Kidney (tissue), 22 donors: ENCODE measurements at regions of chr9 and their contacts with region 1.

Region 1: DNA sequence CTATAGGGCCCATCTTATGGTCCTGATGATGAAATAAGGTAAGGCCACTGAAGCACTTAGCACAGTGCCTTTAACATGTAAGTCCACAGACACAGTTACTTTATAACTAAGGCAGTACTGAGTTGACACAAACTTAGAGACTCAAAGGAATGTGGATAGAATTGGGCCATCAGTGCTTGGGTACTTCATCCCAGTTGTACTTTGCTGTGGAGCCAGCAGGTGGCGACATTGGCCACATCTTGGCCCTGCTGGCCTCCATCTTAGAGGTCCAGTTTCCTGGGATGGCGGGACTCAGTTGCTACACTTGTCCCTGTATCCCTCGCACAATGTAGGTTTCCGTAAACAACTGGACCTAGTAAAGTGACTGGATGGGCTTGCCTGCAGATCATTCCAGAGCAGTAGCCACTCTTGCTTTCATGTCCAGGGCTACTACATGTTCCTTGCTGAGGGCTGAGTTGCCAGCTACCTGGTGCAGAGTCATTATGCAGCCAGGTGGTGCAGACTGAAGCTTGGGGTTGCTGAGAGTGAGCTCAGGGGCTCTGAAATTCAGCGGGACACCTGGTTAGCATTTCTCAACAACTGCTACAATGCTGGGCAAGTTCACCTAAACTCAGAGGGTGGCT is 10.6 kb downstream of the MTAP start:
- DNase-seq: peak; percentile 62 to 80 (median 67)
- H3K4me3 ChIP-seq: no peak overlapping the region
- H3K27ac ChIP-seq: no peak overlapping the region
- H3K4me1 ChIP-seq: peaks cover 0 to 10% (median 0%) of the 10 kb centered on the region in 3 donors
- H3K27me3 ChIP-seq: no peaks in the 10 kb centered on the region
- CTCF ChIP-seq: peak; percentile 88

Region 2: DNA sequence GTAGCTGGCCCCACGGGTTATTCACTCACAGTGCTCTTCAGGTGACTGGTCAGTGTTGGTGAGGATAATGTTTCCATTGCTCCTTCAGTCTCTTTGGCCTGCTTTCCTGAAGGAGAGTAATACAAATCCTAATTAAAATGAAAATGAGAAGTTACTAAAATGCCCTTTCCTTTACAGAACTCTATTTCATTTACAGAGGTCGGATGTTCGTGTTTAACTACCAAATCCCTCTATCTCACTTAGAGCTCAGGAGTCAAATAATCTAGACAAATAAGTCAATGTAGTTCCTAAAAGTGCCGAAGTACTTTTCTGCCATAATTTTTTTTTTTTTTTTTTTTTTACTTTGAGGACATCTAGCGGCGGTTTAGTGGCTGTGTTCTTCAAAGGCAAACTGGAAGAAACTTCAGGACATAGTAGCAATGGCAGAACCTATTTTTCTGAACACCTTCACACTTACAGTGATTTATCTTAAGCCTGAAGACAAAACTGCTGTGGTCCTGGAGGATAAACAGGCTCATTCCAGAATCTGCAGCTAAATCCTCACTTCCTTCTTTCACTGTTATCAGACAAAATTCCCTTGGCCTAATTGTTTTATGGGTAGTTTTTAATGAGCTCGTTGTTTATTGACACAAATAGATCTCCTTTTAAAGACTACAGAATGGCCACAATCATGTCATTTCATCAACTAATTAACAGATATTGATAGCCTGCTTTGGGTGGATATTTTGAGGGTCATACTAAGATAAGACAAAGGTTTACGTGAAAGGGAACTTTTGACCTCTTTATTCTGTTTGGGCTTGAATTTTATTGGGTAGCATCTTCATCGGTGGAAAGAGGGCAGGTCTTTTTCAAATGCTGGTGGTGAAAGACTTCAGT is 426.0 kb after region 1 on chr9:
- intact Hi-C with region 1: loop called (anchors 10 kb)
- DNase-seq: peak in 2 of 5 donors; percentile 20 to 39
- H3K4me3 ChIP-seq: no peak overlapping the region
- H3K27ac ChIP-seq: no peak overlapping the region
- H3K4me1 ChIP-seq: no peaks in the 10 kb centered on the region
- H3K27me3 ChIP-seq: no peaks in the 10 kb centered on the region
- CTCF ChIP-seq: peak; percentile 50